PC-9 (cell line): ENCODE measurements at regions of chr3 and their contacts with region 1.

Region 1: DNA sequence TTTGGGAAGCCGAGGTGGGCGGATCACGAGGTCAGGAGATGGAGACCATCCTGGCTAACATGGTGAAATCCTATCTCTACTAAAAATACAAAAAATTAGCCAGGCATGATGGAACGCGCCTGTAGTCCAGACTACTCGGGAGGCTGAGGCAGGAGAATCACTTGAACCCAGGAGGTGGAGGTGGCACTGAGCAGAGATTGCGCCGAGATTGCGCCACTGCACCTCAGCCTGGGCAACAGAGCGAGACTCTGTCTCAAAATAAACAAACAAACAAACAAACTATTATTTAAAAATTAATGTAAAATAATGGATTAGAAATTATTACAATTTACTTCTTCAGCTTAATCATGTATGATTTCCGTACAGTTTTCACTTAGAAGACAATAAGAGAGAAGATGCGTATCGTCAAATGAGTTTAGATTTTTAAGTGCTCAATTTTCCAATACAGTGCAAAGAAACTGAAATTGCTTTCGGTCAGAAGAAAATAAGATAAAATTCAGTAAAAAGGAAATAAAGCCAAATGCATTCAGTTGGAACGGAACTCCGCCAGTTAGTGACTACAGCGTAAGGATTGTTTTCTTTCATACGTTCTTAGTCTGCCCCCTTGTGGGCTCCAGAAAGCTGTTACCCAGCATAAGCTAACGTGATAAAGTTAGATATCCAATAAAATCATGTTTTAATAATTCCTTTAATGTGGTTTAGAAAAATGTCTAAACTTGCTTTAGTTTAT is 24.8 kb downstream of the AADAC start:
- DNase-seq: peak; percentile 42 to 60
- H3K4me3 ChIP-seq: no peak overlapping the region
- H3K27ac ChIP-seq: no peak overlapping the region
- H3K4me1 ChIP-seq: peaks cover 16% of the 10 kb centered on the region
- H3K27me3 ChIP-seq: no peaks in the 10 kb centered on the region
- CTCF ChIP-seq: peak; percentile 92

Region 2: DNA sequence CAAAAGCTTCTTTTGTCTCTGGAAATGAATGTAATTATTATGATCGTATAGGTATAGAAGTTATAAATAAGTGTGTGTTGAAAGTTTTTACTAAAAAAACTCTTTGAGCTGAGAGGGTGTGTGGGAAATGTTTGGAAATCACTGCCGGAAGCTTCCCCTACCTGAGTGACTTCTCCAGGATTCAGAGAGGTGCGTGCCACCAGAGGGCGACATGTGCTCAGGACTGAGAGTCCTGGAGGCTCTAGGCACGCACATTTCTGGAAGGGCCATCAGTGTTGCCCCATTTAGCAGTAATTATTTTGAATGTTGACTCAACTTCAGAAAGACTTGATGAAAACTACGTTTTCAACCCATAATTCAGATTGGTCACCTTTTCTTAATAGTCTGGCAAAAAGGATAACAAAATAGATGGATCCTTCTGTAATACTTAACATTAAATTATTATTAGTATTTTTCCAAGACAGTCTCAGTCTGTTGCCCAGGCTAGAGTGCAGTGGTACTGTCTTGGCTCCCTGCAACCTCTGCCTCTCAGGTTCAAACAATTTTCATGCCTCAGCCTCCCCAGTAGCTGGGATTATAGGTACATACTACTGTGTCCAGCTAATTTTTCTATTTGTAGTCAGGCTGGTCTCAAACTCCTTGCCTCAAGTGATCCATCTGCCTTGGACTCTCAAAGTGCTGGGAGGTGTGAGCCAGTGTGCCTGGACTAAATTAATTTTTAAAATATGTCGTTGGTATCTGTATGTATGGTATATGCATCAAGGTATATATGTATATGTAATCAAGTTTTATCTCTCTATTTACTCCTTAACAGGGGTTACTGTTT is 670.3 kb before region 1 on chr3:
- CTCF ChIA-PET with region 1: no interaction called
- POLR2A ChIA-PET with region 1: no interaction called
- intact Hi-C with region 1: loop called (anchors 1 kb)
- DNase-seq: peak; percentile 53 to 73
- H3K4me3 ChIP-seq: no peak overlapping the region
- H3K27ac ChIP-seq: no peak overlapping the region
- H3K4me1 ChIP-seq: no peaks in the 10 kb centered on the region
- H3K27me3 ChIP-seq: no peaks in the 10 kb centered on the region
- CTCF ChIP-seq: peak; percentile 92

Region 3: DNA sequence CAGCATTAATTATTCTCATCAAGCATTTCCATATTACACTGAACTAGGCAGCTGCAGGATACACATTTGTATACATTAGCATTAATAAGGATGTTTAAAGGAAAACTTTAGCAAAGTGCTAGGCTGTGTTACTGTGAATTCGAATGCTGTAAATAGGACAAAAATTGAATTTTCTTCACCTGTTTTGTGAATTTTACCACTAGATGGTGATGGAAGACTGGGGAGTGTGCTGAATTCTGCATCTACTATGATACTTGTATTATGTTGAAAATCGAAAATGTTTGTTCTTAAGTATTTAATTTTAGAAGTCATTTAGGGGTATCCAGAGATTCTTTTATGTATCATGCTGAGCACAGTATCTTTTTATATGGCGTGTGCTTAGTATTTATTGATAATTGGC is 548.1 kb before region 1 on chr3:
- CTCF ChIA-PET with region 1: no interaction called
- POLR2A ChIA-PET with region 1: no interaction called
- intact Hi-C with region 1: loop called (anchors 1 kb)
- DNase-seq: peak in 1 of 2 experiments; percentile 46
- H3K4me3 ChIP-seq: no peak overlapping the region
- H3K27ac ChIP-seq: no peak overlapping the region
- H3K4me1 ChIP-seq: no peaks in the 10 kb centered on the region
- H3K27me3 ChIP-seq: no peaks in the 10 kb centered on the region
- CTCF ChIP-seq: peak; percentile 88

Region 4: GRCh38 chr3:151439652-151440129 is 399.1 kb before region 1 on chr3:
- CTCF ChIA-PET with region 1: interaction called, 14 read pairs
- POLR2A ChIA-PET with region 1: no interaction called
- intact Hi-C with region 1: loop called (anchors 1 kb)
- DNase-seq: peak; percentile 40 to 55
- H3K4me3 ChIP-seq: no peak overlapping the region
- H3K27ac ChIP-seq: no peak overlapping the region
- H3K4me1 ChIP-seq: peaks cover under 1% of the 10 kb centered on the region; the same call in 1 of the 2 replicates
- H3K27me3 ChIP-seq: no peaks in the 10 kb centered on the region
- CTCF ChIP-seq: peak; percentile 91

Region 5: DNA sequence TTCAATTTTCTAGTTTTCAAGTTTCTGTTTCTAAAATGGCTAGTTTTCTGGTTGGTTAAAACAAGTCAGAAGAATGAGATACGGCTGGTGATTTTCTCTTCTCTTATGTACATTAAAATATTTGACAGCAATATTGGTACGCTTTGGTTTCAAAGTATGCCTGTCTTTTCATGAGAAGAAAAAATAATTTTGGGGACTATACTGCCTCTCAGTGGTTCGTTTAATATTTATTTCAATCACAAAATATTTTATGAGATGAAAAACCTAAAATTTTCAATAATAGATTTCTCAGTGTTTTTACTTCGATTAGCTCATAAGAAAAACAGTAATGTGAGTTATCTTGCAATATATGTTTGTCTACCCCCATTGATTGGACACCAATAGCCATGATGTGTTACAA is 177.9 kb before region 1 on chr3:
- CTCF ChIA-PET with region 1: no interaction called
- POLR2A ChIA-PET with region 1: no interaction called
- intact Hi-C with region 1: loop called (anchors 5 kb)
- DNase-seq: no peak
- H3K4me3 ChIP-seq: no peak overlapping the region
- H3K27ac ChIP-seq: no peak overlapping the region
- H3K4me1 ChIP-seq: no peaks in the 10 kb centered on the region
- H3K27me3 ChIP-seq: no peaks in the 10 kb centered on the region
- CTCF ChIP-seq: peak; percentile 59

Region 6: GRCh38 chr3:151918253-151919029 is 79.7 kb after region 1 on chr3:
- CTCF ChIA-PET with region 1: interaction called, 7 read pairs
- POLR2A ChIA-PET with region 1: no interaction called
- intact Hi-C with region 1: loop called (anchors 2 kb)
- DNase-seq: peak in 1 of 2 experiments; percentile 49
- H3K4me3 ChIP-seq: no peak overlapping the region
- H3K27ac ChIP-seq: no peak overlapping the region
- H3K4me1 ChIP-seq: no peaks in the 10 kb centered on the region
- H3K27me3 ChIP-seq: no peaks in the 10 kb centered on the region
- CTCF ChIP-seq: peak; percentile 77

Region 7: GRCh38 chr3:152574461-152575079 is 735.8 kb after region 1 on chr3:
- CTCF ChIA-PET with region 1: no interaction called
- POLR2A ChIA-PET with region 1: no interaction called
- intact Hi-C with region 1: loop called (anchors 5 kb)
- DNase-seq: peak in 1 of 2 experiments; percentile 46
- H3K4me3 ChIP-seq: no peak overlapping the region
- H3K27ac ChIP-seq: no peak overlapping the region
- H3K4me1 ChIP-seq: no peaks in the 10 kb centered on the region
- H3K27me3 ChIP-seq: no peaks in the 10 kb centered on the region
- CTCF ChIP-seq: peak; percentile 74